ENCODE measurements at regions of chr10 and their contacts with region 1.

Region 1: GRCh38 chr10:110871298-110872084 is at the start of gene PDCD4:
- DNase-seq: peak; percentile 100
- H3K4me3 ChIP-seq: peak within 1 kb of the TSS; percentile 93 to 100
- H3K27ac ChIP-seq: peak within 1 kb of the TSS; percentile 98 to 99
- H3K4me1 ChIP-seq: peaks cover 0 to 7% of the 10 kb centered on the region in 2 donors
- H3K27me3 ChIP-seq: no peaks in the 10 kb centered on the region
- CTCF ChIP-seq: peak in 2 of 4 experiments; percentile 1 to 4
- POLR2A ChIP-seq: peak; percentile 89 to 95
- total RNA-seq, gene PDCD4: 17.4 to 157 (median 138) TPM

Region 2: GRCh38 chr10:110820321-110820814 is 51.1 kb before region 1 on chr10:
- intact Hi-C with region 1: loop called (anchors 10 kb)
- DNase-seq: peak; percentile 70 to 82
- H3K4me3 ChIP-seq: no peak overlapping the region
- H3K27ac ChIP-seq: peak overlapping the region; percentile 87 to 94
- H3K4me1 ChIP-seq: peaks cover 18 to 25% of the 10 kb centered on the region in 2 donors
- H3K27me3 ChIP-seq: no peaks in the 10 kb centered on the region
- CTCF ChIP-seq: no peak
- POLR2A ChIP-seq: no peak